Activated naive CD4-positive, alpha-beta T cell treated with anti-CD3 and anti-CD28 coated beads, Interleukin-2, amount 10 ng/mL, durations not matched to agents 7 days and 5 days (primary cell): ENCODE measurements at regions of chr20 and their contacts with region 1.

Region 1: GRCh38 chr20:41173161-41173721 is 35.9 kb downstream of the PLCG1 start:
- DNase-seq: peak; percentile 73
- H3K4me3 Mint-ChIP-seq: no peak overlapping the region
- H3K27ac Mint-ChIP-seq: peak overlapping the region; percentile 75
- H3K4me1 Mint-ChIP-seq: peaks cover 22% of the 10 kb centered on the region
- H3K27me3 Mint-ChIP-seq: no peaks in the 10 kb centered on the region

Region 2: GRCh38 chr20:41149679-41150131 is 23.5 kb before region 1 on chr20:
- CTCF ChIA-PET with region 1: interaction called, 41 read pairs
- DNase-seq: no peak
- H3K4me3 Mint-ChIP-seq: peak overlapping the region; percentile 21
- H3K27ac Mint-ChIP-seq: peak overlapping the region; percentile 85
- H3K4me1 Mint-ChIP-seq: peaks cover 98% of the 10 kb centered on the region
- H3K27me3 Mint-ChIP-seq: no peaks in the 10 kb centered on the region

Region 3: DNA sequence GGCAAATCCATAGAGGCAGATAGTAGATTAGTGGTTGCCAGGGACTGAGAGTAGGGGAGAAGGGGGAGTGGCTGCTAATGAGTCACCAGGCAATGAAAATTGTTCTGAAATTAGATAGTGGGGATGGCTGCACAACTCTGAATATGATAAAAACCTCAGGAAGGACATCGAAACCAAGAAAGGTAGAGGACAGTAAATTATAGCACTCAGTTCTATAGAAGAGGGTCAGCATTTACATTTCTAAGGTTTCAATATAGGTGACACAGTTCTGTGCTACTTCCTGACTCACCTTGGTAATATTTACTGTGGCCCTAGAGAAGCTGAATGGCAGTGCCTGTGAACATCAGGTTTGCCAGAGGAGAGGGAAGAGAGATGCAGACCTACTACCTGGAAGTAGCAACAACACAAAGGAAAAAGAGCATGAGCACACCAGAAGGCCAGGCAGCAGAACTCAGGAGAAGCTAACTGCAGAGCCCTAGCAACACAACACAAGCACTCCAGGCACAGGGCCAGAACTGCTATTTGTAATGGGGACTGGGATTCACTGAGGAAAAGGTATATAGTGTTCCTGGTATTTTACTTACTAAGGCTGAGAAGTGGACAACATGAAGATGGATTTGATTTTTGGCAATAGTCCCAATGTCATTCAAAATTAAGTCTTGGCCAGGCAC is 40.0 kb after region 1 on chr20:
- CTCF ChIA-PET with region 1: no interaction called
- DNase-seq: no peak
- H3K4me3 Mint-ChIP-seq: no peak overlapping the region
- H3K27ac Mint-ChIP-seq: no peak overlapping the region
- H3K4me1 Mint-ChIP-seq: peaks cover 3% of the 10 kb centered on the region
- H3K27me3 Mint-ChIP-seq: no peaks in the 10 kb centered on the region

Region 4: DNA sequence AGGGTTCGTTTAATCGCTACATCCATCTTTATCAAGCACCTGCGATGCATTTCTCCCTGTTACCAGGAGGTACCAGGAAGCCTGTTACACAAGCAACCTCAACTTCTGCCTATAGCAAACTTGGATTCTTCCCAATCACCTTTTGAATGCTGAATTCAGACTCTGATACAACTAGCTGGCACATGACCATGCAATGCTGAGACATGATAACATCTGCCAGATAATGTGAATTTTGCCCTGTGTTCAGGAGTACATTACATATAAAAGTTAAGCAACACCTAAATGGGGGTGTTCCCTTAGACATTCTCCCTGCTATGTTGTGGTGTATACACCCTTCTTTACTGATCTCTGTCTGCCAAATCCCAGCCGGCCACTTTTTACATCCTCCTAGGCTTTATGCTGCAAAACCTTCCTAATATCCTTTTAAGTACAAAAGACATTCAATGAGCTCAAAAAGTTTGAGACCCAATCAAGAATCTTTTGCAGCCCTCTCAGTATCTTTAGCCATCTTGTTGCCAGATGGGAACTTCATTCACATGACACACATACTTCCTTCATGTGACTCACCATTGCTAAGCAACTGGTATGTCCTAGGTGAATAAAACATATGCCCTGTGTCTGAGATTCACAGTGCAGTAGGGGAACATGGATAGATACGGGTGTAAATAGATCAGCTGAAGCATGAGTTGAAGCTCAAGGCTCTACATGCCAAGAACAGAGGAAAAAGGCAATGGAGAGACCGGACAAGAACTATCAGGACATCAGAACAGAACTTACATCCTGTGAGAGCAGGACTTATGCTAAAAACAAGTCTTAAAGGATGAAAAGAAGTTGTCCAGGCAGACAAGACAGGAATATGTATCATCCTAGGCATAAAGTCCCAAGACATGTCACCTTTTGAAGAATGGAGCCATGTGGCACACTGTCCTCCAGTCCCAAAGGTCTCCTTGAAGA is 60.0 kb after region 1 on chr20:
- CTCF ChIA-PET with region 1: interaction called, 28 read pairs
- DNase-seq: no peak
- H3K4me3 Mint-ChIP-seq: no peak overlapping the region
- H3K27ac Mint-ChIP-seq: no peak overlapping the region
- H3K4me1 Mint-ChIP-seq: peaks cover 35% of the 10 kb centered on the region
- H3K27me3 Mint-ChIP-seq: no peaks in the 10 kb centered on the region

Region 5: DNA sequence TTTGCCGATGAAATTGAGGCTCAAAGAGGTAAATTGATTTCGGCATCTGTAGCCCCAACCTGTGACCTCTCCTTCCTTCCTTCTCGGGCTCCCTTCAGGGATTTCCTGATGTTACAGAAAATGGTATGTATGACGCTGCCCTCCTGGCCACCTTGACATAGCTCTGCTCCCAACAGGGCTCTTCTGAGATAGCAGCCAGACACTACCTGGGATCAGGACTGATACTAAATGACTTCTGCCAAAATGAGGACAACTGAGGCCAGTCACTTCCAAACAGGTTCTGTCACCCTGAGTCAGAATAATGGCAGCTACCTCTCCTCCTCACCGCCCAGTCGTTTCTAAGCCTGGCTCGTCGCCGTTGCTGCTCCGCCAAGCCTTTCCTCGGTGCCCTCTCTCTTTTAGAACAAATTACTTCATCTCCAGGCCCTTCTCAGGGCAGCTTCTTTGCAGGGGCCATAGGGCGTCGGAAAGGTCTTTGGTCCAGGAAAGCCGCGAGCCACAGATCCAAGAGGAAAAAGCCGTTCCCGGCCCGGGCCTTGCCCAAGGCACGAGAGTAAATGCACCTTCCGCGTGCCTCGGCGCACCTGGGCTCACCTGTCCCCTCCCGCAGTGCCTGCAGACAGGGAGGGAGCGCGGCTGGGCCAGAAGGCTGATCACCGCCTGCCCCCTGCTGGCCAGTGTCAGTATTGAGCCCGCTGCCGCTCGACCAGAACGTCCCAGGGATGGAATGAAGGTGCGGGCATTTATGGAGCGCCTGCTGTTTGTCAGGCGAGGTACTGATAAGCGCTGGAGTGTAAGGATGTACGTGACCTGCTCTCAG is 166.5 kb after region 1 on chr20:
- CTCF ChIA-PET with region 1: interaction called, 27 read pairs
- DNase-seq: peak; percentile 88
- H3K4me3 Mint-ChIP-seq: peak overlapping the region; percentile 58
- H3K27ac Mint-ChIP-seq: no peak overlapping the region
- H3K4me1 Mint-ChIP-seq: peaks cover 13% of the 10 kb centered on the region
- H3K27me3 Mint-ChIP-seq: peaks cover 36% of the 10 kb centered on the region

Region 6: DNA sequence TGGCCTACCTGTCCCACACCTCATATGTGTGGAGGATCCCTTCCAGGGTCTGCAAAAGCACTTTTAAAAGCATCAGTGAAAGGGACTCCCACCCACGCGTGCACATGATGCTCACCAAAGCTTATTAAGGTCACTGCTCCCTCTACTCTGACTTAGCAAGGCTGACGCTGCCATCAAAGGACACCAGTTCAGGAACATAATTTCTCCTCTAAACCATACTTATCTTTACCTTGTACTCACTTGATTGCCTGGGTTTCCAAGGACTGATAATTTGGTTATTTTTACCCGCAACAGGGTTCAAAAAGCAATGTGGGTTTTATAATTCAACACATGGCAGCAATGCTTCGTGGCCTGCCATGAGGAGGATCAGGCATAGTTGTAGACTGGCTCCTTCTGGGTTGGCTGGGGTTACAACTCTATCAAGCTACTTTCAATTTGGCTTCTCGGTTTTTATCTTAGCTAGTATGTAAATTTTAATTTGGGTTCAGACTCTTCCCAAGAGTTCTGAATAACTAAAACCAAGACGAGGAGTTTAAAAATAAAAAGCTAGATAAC is 245.6 kb after region 1 on chr20:
- CTCF ChIA-PET with region 1: no interaction called
- DNase-seq: no peak
- H3K4me3 Mint-ChIP-seq: no peak overlapping the region
- H3K27ac Mint-ChIP-seq: no peak overlapping the region
- H3K4me1 Mint-ChIP-seq: peaks cover 23% of the 10 kb centered on the region
- H3K27me3 Mint-ChIP-seq: no peaks in the 10 kb centered on the region